Mammary epithelial cell (primary cell): ENCODE measurements at regions of chr9 and their contacts with region 1.

Region 1: GRCh38 chr9:120284791-120285190 is 295.2 kb downstream of the CDK5RAP2 start:
- DNase-seq: peak; percentile 92
- H3K4me3 ChIP-seq: no peak overlapping the region
- H3K27ac ChIP-seq: peak overlapping the region; percentile 31
- H3K4me1 ChIP-seq: peaks cover 22% of the 10 kb centered on the region
- H3K27me3 ChIP-seq: no peaks in the 10 kb centered on the region
- CTCF ChIP-seq: no peak

Region 2: GRCh38 chr9:119991797-119992196 is 293.0 kb before region 1 on chr9:
- CTCF ChIA-PET with region 1: no interaction called
- dilution Hi-C with region 1: no loop called
- in situ Hi-C with region 1: no loop called
- intact Hi-C with region 1: no loop called
- DNase-seq: no peak
- H3K4me3 ChIP-seq: no peak overlapping the region
- H3K27ac ChIP-seq: no peak overlapping the region
- H3K4me1 ChIP-seq: no peaks in the 10 kb centered on the region
- H3K27me3 ChIP-seq: peaks cover 3% of the 10 kb centered on the region
- CTCF ChIP-seq: no peak

Region 3: DNA sequence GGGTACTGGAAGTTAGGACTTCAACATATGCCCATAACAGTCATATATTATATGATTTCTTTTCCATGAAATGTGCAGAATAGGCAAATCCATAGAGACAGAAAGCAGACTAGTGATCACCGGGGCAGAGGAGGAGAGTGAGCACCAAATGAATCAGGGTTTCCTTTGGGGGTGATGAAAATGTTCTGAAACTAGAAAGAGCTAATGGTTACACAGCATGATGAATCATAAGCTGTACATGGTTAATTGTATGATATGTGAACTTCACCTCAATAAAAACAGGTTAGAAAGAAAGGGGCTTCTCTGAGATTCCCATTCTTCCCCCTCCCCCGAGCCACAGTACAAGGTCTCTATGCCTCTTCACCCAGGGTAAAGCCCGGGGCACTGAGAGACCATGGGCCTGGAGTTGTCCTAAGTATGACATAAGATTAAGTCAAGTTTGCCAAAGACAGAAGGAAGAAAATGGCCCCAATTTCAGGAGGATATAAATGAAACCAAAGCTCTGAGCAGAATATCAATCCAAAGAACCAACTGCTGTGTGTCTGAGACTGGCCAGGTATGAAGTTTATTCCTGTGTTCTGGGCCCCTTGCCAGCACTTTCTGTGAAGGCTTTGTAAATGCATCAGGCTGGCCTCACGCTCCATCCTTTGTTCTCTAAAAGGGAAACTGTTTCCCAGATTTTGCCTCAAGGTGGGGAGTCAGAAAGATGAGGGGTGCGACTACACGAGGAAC is 51.4 kb after region 1 on chr9:
- CTCF ChIA-PET with region 1: no interaction called
- dilution Hi-C with region 1: no loop called
- in situ Hi-C with region 1: no loop called
- intact Hi-C with region 1: loop called (anchors 5 kb)
- DNase-seq: peak; percentile 43
- H3K4me3 ChIP-seq: no peak overlapping the region
- H3K27ac ChIP-seq: no peak overlapping the region
- H3K4me1 ChIP-seq: peaks cover 15% of the 10 kb centered on the region
- H3K27me3 ChIP-seq: no peaks in the 10 kb centered on the region
- CTCF ChIP-seq: no peak